IMR-90 (cell line): ENCODE measurements at regions of chr16 and their contacts with region 1.

Region 1: GRCh38 chr16:87778830-87779579 is 13.2 kb upstream of the KLHDC4 start:
- DNase-seq: peak; percentile 96
- ATAC-seq: peak; percentile 87
- H3K4me3 ChIP-seq: no peak overlapping the region
- H3K27ac ChIP-seq: peak overlapping the region; percentile 88
- H3K4me1 ChIP-seq: peaks cover 9% of the 10 kb centered on the region
- H3K27me3 ChIP-seq: no peaks in the 10 kb centered on the region
- CTCF ChIP-seq: peak; percentile 99
- POLR2A ChIP-seq: no peak
- RAD21 ChIP-seq: peak; percentile 99

Region 2: DNA sequence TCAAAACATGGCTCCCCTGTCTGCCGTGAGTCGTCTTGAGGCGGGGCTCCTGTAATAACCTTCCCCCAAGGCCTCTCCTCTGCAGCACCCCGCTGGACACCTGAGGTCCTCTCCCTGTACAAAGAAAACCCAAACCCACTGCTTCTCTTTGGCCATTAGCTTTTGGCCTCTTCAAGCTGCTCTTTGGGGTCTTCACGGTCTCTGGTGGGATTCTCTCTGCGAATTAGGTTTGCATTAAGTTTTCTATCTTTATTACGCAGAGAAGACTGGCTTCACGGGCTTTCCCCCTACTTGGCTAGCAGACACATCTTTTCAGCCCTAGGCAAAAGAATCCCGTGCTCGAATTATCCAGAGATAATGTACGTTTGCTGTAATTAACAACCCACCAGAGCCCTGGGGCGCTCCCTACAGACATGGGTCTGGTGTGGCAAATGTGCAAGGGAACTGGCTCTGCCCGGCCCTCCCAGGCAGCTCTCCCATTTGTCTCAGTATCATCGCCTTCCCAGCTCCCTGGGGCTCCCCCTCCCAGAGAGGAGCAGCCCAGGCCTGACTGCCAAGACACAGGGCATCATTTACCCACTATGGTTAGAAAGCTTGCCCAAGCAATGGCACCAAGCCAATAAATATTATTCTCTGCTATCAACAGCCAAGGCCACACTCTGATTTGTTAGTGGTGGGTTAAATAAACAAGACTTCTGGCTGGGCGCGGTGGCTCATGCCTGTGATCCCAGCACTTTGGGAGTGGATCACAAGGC is 11.4 kb after region 1 on chr16:
- CTCF ChIA-PET with region 1: interaction called, 10 read pairs
- POLR2A ChIA-PET with region 1: no interaction called
- dilution Hi-C with region 1: no loop called
- in situ Hi-C with region 1: no loop called
- intact Hi-C with region 1: no loop called
- DNase-seq: peak; percentile 33
- ATAC-seq: peak; percentile 57
- H3K4me3 ChIP-seq: no peak overlapping the region
- H3K27ac ChIP-seq: peak overlapping the region; percentile 14; the same call in 1 of the 2 replicates
- H3K4me1 ChIP-seq: peaks cover 25% of the 10 kb centered on the region
- H3K27me3 ChIP-seq: no peaks in the 10 kb centered on the region
- CTCF ChIP-seq: no peak
- POLR2A ChIP-seq: no peak
- RAD21 ChIP-seq: no peak

Region 3: GRCh38 chr16:87853411-87854052 is 74.5 kb after region 1 on chr16:
- CTCF ChIA-PET with region 1: interaction called, 6 read pairs
- POLR2A ChIA-PET with region 1: no interaction called
- dilution Hi-C with region 1: no loop called
- in situ Hi-C with region 1: no loop called
- intact Hi-C with region 1: loop called (anchors 5 kb)
- DNase-seq: peak; percentile 90
- ATAC-seq: peak; percentile 76
- H3K4me3 ChIP-seq: peak overlapping the region; percentile 16; the same call in 1 of the 2 replicates
- H3K27ac ChIP-seq: peak overlapping the region; percentile 97
- H3K4me1 ChIP-seq: peaks cover 22% of the 10 kb centered on the region
- H3K27me3 ChIP-seq: no peaks in the 10 kb centered on the region
- CTCF ChIP-seq: no peak
- POLR2A ChIP-seq: peak; percentile 68
- RAD21 ChIP-seq: no peak

Region 4: GRCh38 chr16:87864331-87864989 is 85.5 kb after region 1 on chr16:
- CTCF ChIA-PET with region 1: interaction called, 10 read pairs
- POLR2A ChIA-PET with region 1: interaction called, 8 read pairs
- dilution Hi-C with region 1: no loop called
- in situ Hi-C with region 1: no loop called
- intact Hi-C with region 1: no loop called
- DNase-seq: peak; percentile 55
- ATAC-seq: no peak
- H3K4me3 ChIP-seq: no peak overlapping the region
- H3K27ac ChIP-seq: no peak overlapping the region
- H3K4me1 ChIP-seq: peaks cover 16% of the 10 kb centered on the region
- H3K27me3 ChIP-seq: no peaks in the 10 kb centered on the region
- CTCF ChIP-seq: no peak
- POLR2A ChIP-seq: peak; percentile 13; the same call in 1 of the 2 replicates
- RAD21 ChIP-seq: no peak

Region 5: GRCh38 chr16:87877938-87878507 is 99.0 kb after region 1 on chr16:
- CTCF ChIA-PET with region 1: interaction called, 5 read pairs
- POLR2A ChIA-PET with region 1: no interaction called
- dilution Hi-C with region 1: no loop called
- in situ Hi-C with region 1: loop called (anchors 5 kb)
- intact Hi-C with region 1: no loop called
- DNase-seq: no peak
- ATAC-seq: peak; percentile 53; the same call in 1 of the 2 replicates
- H3K4me3 ChIP-seq: no peak overlapping the region
- H3K27ac ChIP-seq: no peak overlapping the region
- H3K4me1 ChIP-seq: no peaks in the 10 kb centered on the region
- H3K27me3 ChIP-seq: peaks cover 26% of the 10 kb centered on the region
- CTCF ChIP-seq: peak; percentile 23; the same call in 1 of the 2 replicates
- POLR2A ChIP-seq: no peak
- RAD21 ChIP-seq: no peak